ENCODE measurements at regions of chrX and their contacts with region 1.

Region 1: DNA sequence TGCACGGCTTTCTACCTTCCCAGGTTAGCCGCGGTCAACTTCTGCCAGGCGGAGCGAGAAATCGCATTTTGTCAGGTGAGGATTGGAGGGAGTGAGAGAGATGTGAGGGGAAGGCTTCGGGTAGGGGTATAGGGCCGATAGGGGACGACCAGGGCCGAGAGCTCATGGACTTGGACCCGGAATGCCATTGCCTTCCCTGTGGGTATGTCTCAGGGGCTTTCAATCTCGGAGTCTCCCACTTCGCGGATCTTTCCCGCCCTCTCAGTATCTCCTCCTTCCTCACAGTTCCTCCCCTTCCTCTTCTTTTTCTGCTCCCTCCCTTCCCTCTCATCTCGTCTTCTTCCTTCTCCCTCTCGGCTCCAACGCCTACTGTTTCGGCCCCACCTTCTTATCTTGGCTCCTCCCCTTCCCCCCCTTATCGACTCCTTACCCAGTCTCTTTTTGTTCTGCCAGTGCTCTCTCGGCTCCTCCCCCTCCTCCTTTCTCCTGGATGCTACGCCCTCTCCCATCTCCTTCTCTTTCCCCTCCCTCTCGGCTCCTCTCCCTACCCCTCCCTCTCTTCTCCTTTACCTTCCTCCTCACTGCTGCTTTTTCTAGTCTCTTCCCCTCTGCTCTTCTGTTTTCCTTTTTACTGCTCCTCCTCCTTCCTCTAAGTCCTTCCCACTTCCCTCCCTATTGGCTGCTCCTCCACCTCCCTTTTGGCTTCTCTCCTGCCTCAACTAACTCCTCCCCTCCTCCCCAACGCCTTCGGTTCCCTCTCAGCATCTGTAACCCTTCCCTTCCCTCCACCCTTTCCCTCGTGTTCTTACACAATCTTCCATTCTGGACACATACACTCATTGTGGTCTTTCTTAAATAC is 29.4 kb upstream of the RBMX start:
- DNase-seq: peak; percentile 82 to 92
- H3K4me3 ChIP-seq: peak overlapping the region; percentile 65
- H3K4me3 Mint-ChIP-seq: peak overlapping the region; percentile 95
- H3K27ac Mint-ChIP-seq: peak overlapping the region; percentile 88
- H3K4me1 ChIP-seq: no peaks in the 10 kb centered on the region
- H3K4me1 Mint-ChIP-seq: no peaks in the 10 kb centered on the region
- H3K27me3 ChIP-seq: no peaks in the 10 kb centered on the region
- H3K27me3 Mint-ChIP-seq: no peaks in the 10 kb centered on the region
- CTCF ChIP-seq: no peak

Region 2: DNA sequence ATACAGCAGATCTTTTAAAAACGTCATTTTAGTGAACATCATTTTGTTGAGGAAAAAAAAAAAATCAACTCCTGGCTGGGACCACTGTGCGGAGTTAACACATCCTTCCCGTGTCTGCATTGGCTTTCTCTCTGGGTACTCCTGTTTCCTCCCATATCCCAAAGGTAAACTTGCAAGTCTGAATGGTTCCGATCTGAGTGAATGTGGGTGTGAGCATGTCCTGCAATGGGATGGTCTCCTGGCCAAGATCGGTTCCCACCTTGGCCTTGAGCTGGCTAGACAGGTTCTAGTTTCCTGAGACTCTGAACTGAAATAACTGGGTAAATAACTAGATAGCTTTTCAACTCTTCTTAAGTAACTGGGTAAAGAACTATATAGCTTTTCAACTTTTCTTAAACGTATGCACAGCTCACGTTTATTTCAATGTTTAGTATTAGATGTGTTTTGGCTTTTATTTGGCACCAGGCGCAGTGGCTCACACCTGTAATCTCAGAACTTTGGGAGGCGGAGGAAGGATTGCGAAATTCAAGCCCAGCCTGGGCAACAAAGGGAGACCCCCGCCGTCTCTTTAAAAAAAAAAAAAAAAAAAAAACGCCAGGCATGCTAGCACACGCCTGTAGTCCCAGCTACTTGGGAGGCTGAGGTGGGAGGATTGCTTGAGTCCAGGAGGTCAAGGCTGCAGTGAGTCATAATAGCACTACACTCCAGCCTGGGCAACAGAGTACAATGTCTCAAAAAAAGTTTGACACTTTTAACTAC is 43.4 kb before region 1 on chrX:
- CTCF ChIA-PET with region 1: interaction called, 4 read pairs
- POLR2A ChIA-PET with region 1: interaction called, 5 read pairs
- intact Hi-C with region 1: loop called (anchors 5 kb)
- DNase-seq: peak in 1 of 2 experiments; percentile 34
- H3K4me3 ChIP-seq: no peak overlapping the region
- H3K4me3 Mint-ChIP-seq: no peak overlapping the region
- H3K27ac Mint-ChIP-seq: peak overlapping the region; percentile 29
- H3K4me1 ChIP-seq: no peaks in the 10 kb centered on the region
- H3K4me1 Mint-ChIP-seq: peaks cover 6% of the 10 kb centered on the region
- H3K27me3 ChIP-seq: no peaks in the 10 kb centered on the region
- H3K27me3 Mint-ChIP-seq: no peaks in the 10 kb centered on the region
- CTCF ChIP-seq: no peak

Region 3: GRCh38 chrX:136880452-136881013 is 29.4 kb before region 1 on chrX and contains the start of gene RBMX:
- CTCF ChIA-PET with region 1: no interaction called
- POLR2A ChIA-PET with region 1: interaction called, 22 read pairs
- intact Hi-C with region 1: loop called (anchors 1 kb)
- DNase-seq: peak; percentile 89 to 91
- H3K4me3 ChIP-seq: peak within 1 kb of the TSS; percentile 79
- H3K4me3 Mint-ChIP-seq: peak within 1 kb of the TSS; percentile 84
- H3K27ac Mint-ChIP-seq: peak within 1 kb of the TSS; percentile 98
- H3K4me1 ChIP-seq: no peaks in the 10 kb centered on the region
- H3K4me1 Mint-ChIP-seq: peaks cover 4% of the 10 kb centered on the region
- H3K27me3 ChIP-seq: no peaks in the 10 kb centered on the region
- H3K27me3 Mint-ChIP-seq: no peaks in the 10 kb centered on the region
- CTCF ChIP-seq: no peak
- total RNA-seq, gene RBMX: 253 and 261 TPM in 2 replicates

Measured in Caco-2 (cell line).